K562 (cell line): ENCODE measurements at regions of chr2 and their contacts with region 1.

Region 1: GRCh38 chr2:20348542-20348941 is 2.1 kb downstream of the PUM2 start:
- DNase-seq: peak in 2 of 4 experiments; percentile 19 to 72
- ATAC-seq: peak; percentile 1
- H3K4me3 ChIP-seq: peak overlapping the region; percentile 83; the same call in 1 of the 2 replicates
- H3K27ac ChIP-seq: peak overlapping the region; percentile 6; the same call in 2 of the 3 replicates
- H3K4me1 ChIP-seq: peaks cover 31 to 43% of the 10 kb centered on the region in 2 experiments
- H3K27me3 ChIP-seq: no peaks in the 10 kb centered on the region
- CTCF ChIP-seq: no peak
- EP300 ChIP-seq: peak; percentile 50; the same call in 1 of the 2 replicates
- POLR2A ChIP-seq: 0 out of 2 replicates have a peak, but pooled peaks have one; percentile 38
- RAD21 ChIP-seq: no peak

Region 2: GRCh38 chr2:19488009-19488691 is 860.4 kb before region 1 on chr2:
- CTCF ChIA-PET with region 1: no interaction called
- POLR2A ChIA-PET with region 1: no interaction called
- in situ Hi-C with region 1: no loop called
- intact Hi-C with region 1: no loop called
- DNase-seq: no peak
- ATAC-seq: no peak
- H3K4me3 ChIP-seq: no peak overlapping the region
- H3K27ac ChIP-seq: no peak overlapping the region
- H3K4me1 ChIP-seq: no peaks in the 10 kb centered on the region
- H3K27me3 ChIP-seq: no peaks in the 10 kb centered on the region
- CTCF ChIP-seq: no peak
- EP300 ChIP-seq: no peak
- POLR2A ChIP-seq: no peak
- RAD21 ChIP-seq: no peak

Region 3: GRCh38 chr2:19901442-19902215 is 446.9 kb before region 1 on chr2 and contains the start of gene TTC32:
- CTCF ChIA-PET with region 1: no interaction called
- POLR2A ChIA-PET with region 1: no interaction called
- in situ Hi-C with region 1: no loop called
- intact Hi-C with region 1: loop called (anchors 2 kb)
- DNase-seq: peak; percentile 96 to 97 (median 96)
- ATAC-seq: peak; percentile 77
- H3K4me3 ChIP-seq: peak within 1 kb of the TSS; percentile 68
- H3K27ac ChIP-seq: peak within 1 kb of the TSS; percentile 99
- H3K4me1 ChIP-seq: peaks cover 10 to 12% of the 10 kb centered on the region in 2 experiments; a peak in 4 of 5 replicates
- H3K27me3 ChIP-seq: no peaks in the 10 kb centered on the region
- CTCF ChIP-seq: peak in 2 of 3 experiments; percentile 13 to 28; a peak in 2 of 6 replicates
- EP300 ChIP-seq: peak; percentile 91
- POLR2A ChIP-seq: peak; percentile 96
- RAD21 ChIP-seq: no peak
- polyA plus RNA-seq, gene TTC32: 55.0 to 66.5 TPM

Region 4: DNA sequence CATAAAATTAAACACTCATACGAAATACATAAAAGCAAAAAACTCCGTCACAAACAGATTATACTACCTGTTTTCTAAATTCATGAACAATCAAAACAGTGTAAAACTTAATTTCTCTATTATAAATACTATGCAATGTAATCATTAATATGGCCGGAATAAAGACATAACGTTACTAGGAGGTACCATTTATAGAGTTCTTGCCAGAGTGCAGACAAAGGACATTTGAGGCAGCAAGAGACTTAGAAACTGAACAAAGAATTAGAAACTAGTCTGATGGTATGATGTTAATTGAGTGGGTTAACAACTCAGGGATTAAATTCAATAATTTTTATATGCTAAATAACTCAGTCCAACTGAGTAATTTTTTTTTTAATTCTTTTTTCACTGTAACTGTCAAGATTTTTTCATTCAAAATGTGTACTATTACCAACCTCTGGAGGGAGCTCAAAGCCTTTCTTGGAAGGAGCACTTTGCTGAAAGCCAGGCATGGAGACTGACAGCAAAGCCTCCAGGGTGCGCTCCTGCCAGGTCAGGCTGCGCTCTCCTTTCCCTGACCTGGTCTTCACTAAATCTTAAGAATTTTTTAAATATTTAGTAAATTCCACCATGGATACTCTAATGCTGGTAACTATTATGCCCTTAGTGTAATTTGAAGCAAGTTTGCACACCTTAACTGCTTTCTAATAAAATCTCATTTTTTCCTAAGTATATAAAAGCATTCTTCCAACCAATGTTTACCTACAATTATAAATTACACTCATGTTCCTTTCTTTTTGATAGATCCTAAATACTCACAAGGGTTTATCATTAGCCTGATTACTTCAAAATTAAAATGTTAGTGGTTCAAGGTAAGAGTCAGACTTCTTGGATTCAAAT is 392.8 kb before region 1 on chr2:
- CTCF ChIA-PET with region 1: no interaction called
- POLR2A ChIA-PET with region 1: no interaction called
- in situ Hi-C with region 1: no loop called
- intact Hi-C with region 1: no loop called
- DNase-seq: peak; percentile 57 to 84 (median 65)
- ATAC-seq: peak; percentile 100
- H3K4me3 ChIP-seq: no peak overlapping the region
- H3K27ac ChIP-seq: no peak overlapping the region
- H3K4me1 ChIP-seq: no peaks in the 10 kb centered on the region
- H3K27me3 ChIP-seq: no peaks in the 10 kb centered on the region
- CTCF ChIP-seq: peak; percentile 92 to 100 (median 99)
- EP300 ChIP-seq: no peak
- POLR2A ChIP-seq: no peak
- RAD21 ChIP-seq: peak; percentile 97 to 98